Caco-2 (cell line): ENCODE measurements at regions of chr1 and their contacts with region 1.

Region 1: DNA sequence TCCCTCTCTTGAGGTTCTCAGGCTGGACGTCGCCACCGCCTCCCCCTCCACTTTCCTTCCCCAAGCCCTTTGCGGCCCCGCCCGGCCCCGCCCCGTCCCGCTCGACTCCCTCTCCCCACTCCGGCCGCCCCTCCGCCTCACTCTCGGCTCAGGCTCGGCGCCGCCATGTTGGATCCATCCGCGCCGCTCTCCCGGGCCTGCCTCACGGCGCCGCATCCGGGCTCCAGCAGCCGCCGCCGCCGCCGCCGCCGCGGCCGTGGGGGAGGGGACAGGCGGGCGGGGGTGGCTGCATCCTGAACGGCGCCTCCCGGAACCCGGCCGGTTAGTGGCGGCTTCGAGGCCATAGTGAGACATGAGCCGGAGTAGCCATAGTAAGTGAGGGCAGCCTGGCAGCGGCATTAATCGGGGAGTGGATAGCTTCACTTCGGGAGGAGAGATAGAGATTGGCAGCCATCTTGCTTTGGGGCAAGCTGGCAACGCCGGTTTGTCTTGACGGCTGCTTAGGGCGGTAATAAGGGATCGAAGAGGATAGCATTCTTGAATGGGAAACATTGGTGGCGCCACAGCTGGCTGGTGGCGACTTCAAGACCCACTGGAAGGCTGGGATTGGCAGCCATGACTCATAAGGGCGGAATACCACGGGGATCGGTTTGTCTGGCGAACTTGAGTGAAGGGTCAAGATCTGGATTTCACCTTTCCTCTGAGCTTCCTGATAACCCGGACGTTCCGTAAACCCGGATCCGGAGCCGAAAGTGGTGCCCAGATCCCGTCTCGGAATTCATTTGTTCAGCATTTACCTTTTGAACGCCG is at the start of gene DEDD:
- DNase-seq: peak; percentile 93 to 96
- H3K4me3 ChIP-seq: peak within 1 kb of the TSS; percentile 71
- H3K4me3 Mint-ChIP-seq: no peak within 1 kb of the TSS
- H3K27ac Mint-ChIP-seq: no peak within 1 kb of the TSS
- H3K4me1 ChIP-seq: no peaks in the 10 kb centered on the region
- H3K4me1 Mint-ChIP-seq: peaks cover 10% of the 10 kb centered on the region
- H3K27me3 ChIP-seq: no peaks in the 10 kb centered on the region
- H3K27me3 Mint-ChIP-seq: no peaks in the 10 kb centered on the region
- CTCF ChIP-seq: no peak
- total RNA-seq, gene DEDD: 33.8 and 37.0 TPM in 2 replicates

Region 2: GRCh38 chr1:161021165-161021960 is 111.3 kb before region 1 on chr1:
- CTCF ChIA-PET with region 1: no interaction called
- POLR2A ChIA-PET with region 1: interaction called, 15 read pairs
- intact Hi-C with region 1: no loop called
- DNase-seq: peak; percentile 99 to 100
- H3K4me3 ChIP-seq: peak overlapping the region; percentile 67
- H3K4me3 Mint-ChIP-seq: peak overlapping the region; percentile 89
- H3K27ac Mint-ChIP-seq: peak overlapping the region; percentile 97
- H3K4me1 ChIP-seq: peaks cover 38% of the 10 kb centered on the region
- H3K4me1 Mint-ChIP-seq: peaks cover 50% of the 10 kb centered on the region
- H3K27me3 ChIP-seq: no peaks in the 10 kb centered on the region
- H3K27me3 Mint-ChIP-seq: no peaks in the 10 kb centered on the region
- CTCF ChIP-seq: no peak

Region 3: GRCh38 chr1:161059293-161059692 is 73.3 kb before region 1 on chr1:
- CTCF ChIA-PET with region 1: no interaction called
- POLR2A ChIA-PET with region 1: interaction called, 11 read pairs
- intact Hi-C with region 1: no loop called
- DNase-seq: no peak
- H3K4me3 ChIP-seq: no peak overlapping the region
- H3K4me3 Mint-ChIP-seq: no peak overlapping the region
- H3K27ac Mint-ChIP-seq: no peak overlapping the region
- H3K4me1 ChIP-seq: no peaks in the 10 kb centered on the region
- H3K4me1 Mint-ChIP-seq: no peaks in the 10 kb centered on the region
- H3K27me3 ChIP-seq: no peaks in the 10 kb centered on the region
- H3K27me3 Mint-ChIP-seq: no peaks in the 10 kb centered on the region
- CTCF ChIP-seq: no peak

Region 4: DNA sequence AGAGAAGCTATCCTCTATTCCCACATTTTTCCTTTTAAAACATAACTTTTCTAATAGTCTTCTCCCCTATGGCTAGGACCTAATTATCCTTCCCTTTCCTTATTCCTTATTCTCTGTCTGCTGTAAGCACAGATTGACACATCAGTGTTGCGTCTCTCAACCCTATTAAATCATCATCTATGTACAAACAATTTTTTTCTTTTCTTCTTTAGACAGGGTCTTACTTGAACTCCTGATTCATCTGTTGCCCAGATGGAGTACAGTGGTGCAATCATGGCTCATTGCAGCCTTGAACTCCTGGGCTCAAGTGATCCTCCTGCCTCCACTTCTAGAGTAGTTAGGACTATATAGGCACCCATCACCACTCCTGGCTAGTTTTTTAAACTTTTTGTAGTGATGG is 26.2 kb before region 1 on chr1:
- CTCF ChIA-PET with region 1: no interaction called
- POLR2A ChIA-PET with region 1: no interaction called
- intact Hi-C with region 1: no loop called
- DNase-seq: no peak
- H3K4me3 ChIP-seq: no peak overlapping the region
- H3K4me3 Mint-ChIP-seq: no peak overlapping the region
- H3K27ac Mint-ChIP-seq: no peak overlapping the region
- H3K4me1 ChIP-seq: no peaks in the 10 kb centered on the region
- H3K4me1 Mint-ChIP-seq: no peaks in the 10 kb centered on the region
- H3K27me3 ChIP-seq: no peaks in the 10 kb centered on the region
- H3K27me3 Mint-ChIP-seq: no peaks in the 10 kb centered on the region
- CTCF ChIP-seq: no peak

Region 5: DNA sequence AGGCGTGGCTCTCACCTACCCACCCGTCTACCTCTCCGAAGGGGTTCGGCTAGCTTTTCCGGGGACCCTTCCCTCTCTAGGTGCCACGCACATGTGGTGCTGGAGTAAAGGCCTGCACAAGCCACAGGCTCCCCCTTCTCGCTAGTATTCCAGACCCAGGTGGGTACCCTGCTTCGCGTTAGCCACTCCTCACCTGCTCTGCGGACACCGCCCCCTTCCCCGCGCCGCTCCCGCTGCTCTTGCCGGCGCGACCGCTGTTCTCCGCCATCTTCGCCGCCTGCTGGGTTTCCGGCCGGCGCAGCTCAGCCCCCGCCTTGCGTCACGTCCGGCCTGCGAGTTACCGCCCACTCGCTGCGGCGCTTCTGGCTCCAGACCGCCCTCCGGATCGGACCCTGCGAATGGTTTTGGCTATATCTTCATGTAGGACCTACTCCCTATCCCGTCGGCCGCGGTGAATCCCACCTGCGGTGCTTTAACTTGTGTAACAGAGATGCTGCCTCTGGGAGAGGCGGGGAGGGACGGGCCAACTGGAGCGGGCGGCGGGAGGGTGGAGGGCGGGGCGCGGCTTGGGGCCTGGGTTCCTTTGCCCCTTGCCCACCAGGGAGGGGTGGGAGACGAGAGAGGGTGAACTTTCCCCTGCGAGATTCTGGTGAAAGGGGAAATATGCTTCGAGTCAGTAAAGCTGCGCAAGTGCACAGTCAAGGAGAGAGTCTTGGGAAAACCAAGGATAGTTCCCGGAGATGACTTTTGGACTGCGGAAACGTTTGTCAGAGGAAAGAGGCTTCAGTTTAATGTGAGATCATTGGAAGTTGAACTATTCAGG is 14.6 kb before region 1 on chr1 and contains the starts of genes NIT1 and PFDN2:
- CTCF ChIA-PET with region 1: interaction called, 6 read pairs
- POLR2A ChIA-PET with region 1: interaction called, 12 read pairs
- intact Hi-C with region 1: loop called (anchors 1 kb)
- DNase-seq: peak; percentile 91 to 92
- H3K4me3 ChIP-seq: peak within 1 kb of the TSS; percentile 91
- H3K4me3 Mint-ChIP-seq: peak within 1 kb of the TSS; percentile 99
- H3K27ac Mint-ChIP-seq: peak within 1 kb of the TSS; percentile 96
- H3K4me1 ChIP-seq: peaks cover 17% of the 10 kb centered on the region
- H3K4me1 Mint-ChIP-seq: peaks cover 13% of the 10 kb centered on the region
- H3K27me3 ChIP-seq: no peaks in the 10 kb centered on the region
- H3K27me3 Mint-ChIP-seq: no peaks in the 10 kb centered on the region
- CTCF ChIP-seq: no peak
- total RNA-seq, gene NIT1: 41.8 and 42.1 TPM in 2 replicates
- total RNA-seq, gene PFDN2: 80.0 and 88.0 TPM in 2 replicates

Region 6: DNA sequence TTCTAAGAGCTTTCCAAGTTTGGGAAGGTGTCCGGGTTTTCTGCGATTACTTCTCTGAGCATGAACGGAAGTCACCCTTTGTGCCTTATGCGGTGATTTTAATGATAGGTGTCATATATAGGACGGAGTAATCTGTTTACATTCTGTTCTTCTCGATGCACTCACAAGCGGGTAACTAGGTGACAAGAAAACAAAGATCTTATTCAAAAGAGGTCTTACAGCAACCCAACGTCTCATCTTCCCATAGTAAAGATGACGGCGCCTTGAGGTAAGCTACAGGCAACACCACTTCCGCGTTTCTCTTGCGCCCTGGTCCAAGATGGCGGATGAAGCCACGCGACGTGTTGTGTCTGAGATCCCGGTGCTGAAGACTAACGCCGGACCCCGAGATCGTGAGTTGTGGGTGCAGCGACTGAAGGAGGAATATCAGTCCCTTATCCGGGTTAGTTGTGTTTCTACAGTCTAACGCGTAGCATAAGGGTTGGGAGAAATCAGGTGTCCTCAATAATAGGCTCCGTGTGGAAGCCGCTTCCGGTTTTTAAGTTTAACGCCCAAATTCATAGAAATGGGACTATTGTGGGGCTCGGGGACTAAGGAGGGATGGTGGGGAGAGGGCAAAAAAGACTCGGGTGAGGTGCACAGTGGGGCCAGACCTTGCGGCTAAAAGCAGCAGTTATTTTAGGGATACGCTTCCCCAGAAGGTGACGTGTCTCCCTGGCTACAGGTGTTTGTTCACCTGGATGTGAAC is 21.2 kb after region 1 on chr1 and contains the start of gene UFC1:
- CTCF ChIA-PET with region 1: interaction called, 6 read pairs
- POLR2A ChIA-PET with region 1: interaction called, 6 read pairs
- intact Hi-C with region 1: loop called (anchors 1 kb)
- DNase-seq: peak; percentile 85 to 88
- H3K4me3 ChIP-seq: peak within 1 kb of the TSS; percentile 77
- H3K4me3 Mint-ChIP-seq: peak within 1 kb of the TSS; percentile 95
- H3K27ac Mint-ChIP-seq: peak within 1 kb of the TSS; percentile 99
- H3K4me1 ChIP-seq: 0 out of 2 replicates have a peak, but pooled peaks cover 2% of the 10 kb centered on the region
- H3K4me1 Mint-ChIP-seq: peaks cover 12% of the 10 kb centered on the region
- H3K27me3 ChIP-seq: no peaks in the 10 kb centered on the region
- H3K27me3 Mint-ChIP-seq: no peaks in the 10 kb centered on the region
- CTCF ChIP-seq: no peak
- total RNA-seq, gene UFC1: 98.2 and 105 TPM in 2 replicates

Region 7: GRCh38 chr1:161165742-161166668 is 33.4 kb after region 1 on chr1 and contains the start of gene PPOX:
- CTCF ChIA-PET with region 1: interaction called, 3 read pairs
- POLR2A ChIA-PET with region 1: interaction called, 10 read pairs
- intact Hi-C with region 1: no loop called
- DNase-seq: peak; percentile 96 to 98
- H3K4me3 ChIP-seq: peak within 1 kb of the TSS; percentile 88
- H3K4me3 Mint-ChIP-seq: peak within 1 kb of the TSS; percentile 83
- H3K27ac Mint-ChIP-seq: peak within 1 kb of the TSS; percentile 81
- H3K4me1 ChIP-seq: peaks cover 3% of the 10 kb centered on the region; the same call in 1 of the 2 replicates
- H3K4me1 Mint-ChIP-seq: no peaks in the 10 kb centered on the region
- H3K27me3 ChIP-seq: no peaks in the 10 kb centered on the region
- H3K27me3 Mint-ChIP-seq: no peaks in the 10 kb centered on the region
- CTCF ChIP-seq: peak in 1 of 2 experiments; percentile 55
- total RNA-seq, gene PPOX: 25.0 and 25.4 TPM in 2 replicates